Endothelial cell of umbilical vein (primary cell): ENCODE measurements at regions of chr4 and their contacts with region 1.

Region 1: DNA sequence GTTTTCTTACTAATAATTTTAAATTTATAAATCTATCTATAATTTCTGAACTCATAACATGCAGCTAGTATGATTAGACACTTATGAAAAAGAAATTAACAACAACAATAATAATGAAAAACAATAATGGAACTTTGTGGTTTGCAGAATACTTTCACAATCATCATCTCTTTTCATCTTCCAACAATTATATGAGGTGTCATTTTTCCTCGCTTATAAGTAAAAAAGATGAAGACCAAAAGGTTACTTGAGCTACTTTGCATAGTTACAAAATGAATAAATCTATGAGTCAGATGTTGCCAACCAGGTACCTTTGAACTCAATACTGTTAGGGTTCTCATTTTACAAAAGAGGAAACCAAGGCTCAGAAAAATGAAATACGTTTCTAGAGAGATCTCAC is 98.5 kb upstream of the ELOVL6 start:
- DNase-seq: no peak
- H3K4me3 ChIP-seq: no peak overlapping the region
- H3K27ac ChIP-seq: no peak overlapping the region
- H3K4me1 ChIP-seq: no peaks in the 10 kb centered on the region
- H3K27me3 ChIP-seq: peaks cover 0 to 3% of the 10 kb centered on the region in 2 experiments
- CTCF ChIP-seq: no peak
- POLR2A ChIP-seq: no peak

Region 2: GRCh38 chr4:110310795-110311194 is 13.9 kb after region 1 on chr4:
- CTCF ChIA-PET with region 1: interaction called, 10 read pairs
- POLR2A ChIA-PET with region 1: no interaction called
- dilution Hi-C with region 1: no loop called
- intact Hi-C with region 1: no loop called
- DNase-seq: no peak
- H3K4me3 ChIP-seq: no peak overlapping the region
- H3K27ac ChIP-seq: no peak overlapping the region
- H3K4me1 ChIP-seq: no peaks in the 10 kb centered on the region
- H3K27me3 ChIP-seq: no peaks in the 10 kb centered on the region
- CTCF ChIP-seq: no peak
- POLR2A ChIP-seq: no peak